Panc1 (cell line): ENCODE measurements at regions of chr2 and their contacts with region 1.

Region 1: GRCh38 chr2:236168110-236169067 is at the start of gene GBX2:
- DNase-seq: no peak
- ATAC-seq: peak; percentile 87
- H3K4me3 ChIP-seq: peak within 1 kb of the TSS; percentile 67 to 76
- H3K27ac ChIP-seq: peak within 1 kb of the TSS; percentile 70
- H3K4me1 ChIP-seq: peaks cover 9% of the 10 kb centered on the region
- H3K27me3 ChIP-seq: no peaks in the 10 kb centered on the region
- CTCF ChIP-seq: peak; percentile 16; the same call in 1 of the 2 replicates
- total RNA-seq, gene GBX2: 10.2 TPM

Region 2: DNA sequence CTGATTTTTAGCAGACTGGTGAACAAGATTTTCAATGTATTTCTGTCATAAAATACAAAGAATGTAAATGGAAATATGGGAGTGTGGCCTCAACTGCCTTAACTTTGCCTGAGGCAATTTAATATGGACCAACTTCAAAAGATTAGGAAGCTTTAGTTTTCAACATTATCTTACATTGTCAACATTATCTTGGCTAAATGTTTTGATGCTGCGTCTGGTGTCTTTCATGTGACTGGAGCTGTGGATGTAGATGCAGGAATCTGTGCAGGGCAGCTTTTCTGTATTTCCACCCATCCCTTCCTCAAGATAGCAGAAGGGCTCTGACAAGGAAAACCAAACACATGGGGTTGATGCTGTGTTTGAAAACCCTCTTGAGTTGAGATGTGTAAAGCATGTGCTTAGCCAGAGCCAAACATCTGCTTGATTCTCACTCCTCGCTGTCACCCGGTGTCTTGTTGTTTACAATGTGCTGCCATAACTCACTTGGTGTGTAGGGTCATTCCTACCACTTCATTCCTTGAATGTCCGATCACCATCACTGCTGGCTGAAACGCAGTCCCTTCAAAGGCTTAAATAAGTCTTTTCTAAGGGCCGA is 950.3 kb after region 1 on chr2:
- CTCF ChIA-PET with region 1: no interaction called
- POLR2A ChIA-PET with region 1: interaction called, 10 read pairs
- in situ Hi-C with region 1: no loop called
- intact Hi-C with region 1: no loop called
- DNase-seq: no peak
- ATAC-seq: no peak
- H3K4me3 ChIP-seq: no peak overlapping the region
- H3K27ac ChIP-seq: no peak overlapping the region; the same call in 1 of the 2 replicates
- H3K4me1 ChIP-seq: no peaks in the 10 kb centered on the region
- H3K27me3 ChIP-seq: no peaks in the 10 kb centered on the region
- CTCF ChIP-seq: no peak